ENCODE measurements at regions of chr11 and their contacts with region 1.

Region 1: DNA sequence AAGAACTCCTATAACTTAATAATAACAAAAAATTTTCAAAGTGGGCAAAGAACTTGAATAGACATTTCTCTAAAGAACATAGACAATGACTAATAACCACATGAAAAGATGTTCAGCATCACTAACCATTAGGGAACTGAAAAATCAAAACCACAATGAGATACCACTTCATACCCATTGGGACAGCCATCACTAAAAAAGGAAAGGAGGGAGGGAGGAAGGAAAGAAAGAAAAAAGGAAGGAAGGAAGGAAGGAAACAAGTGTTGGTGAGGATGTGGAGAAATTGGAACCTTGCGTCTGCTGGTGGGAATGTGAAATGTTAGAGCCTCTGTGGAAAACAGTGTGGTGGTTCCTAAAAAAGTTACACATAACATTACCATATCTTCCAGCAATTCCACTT is 55.8 kb downstream of the MS4A13 start:
- DNase-seq: no peak
- ATAC-seq: peak; percentile 96
- H3K4me3 Mint-ChIP-seq: peak overlapping the region; percentile 7
- H3K27ac Mint-ChIP-seq: peak overlapping the region; percentile 56
- H3K4me1 Mint-ChIP-seq: peaks cover 30% of the 10 kb centered on the region
- H3K27me3 Mint-ChIP-seq: peaks cover 3% of the 10 kb centered on the region
- CTCF ChIP-seq: no peak

Region 2: DNA sequence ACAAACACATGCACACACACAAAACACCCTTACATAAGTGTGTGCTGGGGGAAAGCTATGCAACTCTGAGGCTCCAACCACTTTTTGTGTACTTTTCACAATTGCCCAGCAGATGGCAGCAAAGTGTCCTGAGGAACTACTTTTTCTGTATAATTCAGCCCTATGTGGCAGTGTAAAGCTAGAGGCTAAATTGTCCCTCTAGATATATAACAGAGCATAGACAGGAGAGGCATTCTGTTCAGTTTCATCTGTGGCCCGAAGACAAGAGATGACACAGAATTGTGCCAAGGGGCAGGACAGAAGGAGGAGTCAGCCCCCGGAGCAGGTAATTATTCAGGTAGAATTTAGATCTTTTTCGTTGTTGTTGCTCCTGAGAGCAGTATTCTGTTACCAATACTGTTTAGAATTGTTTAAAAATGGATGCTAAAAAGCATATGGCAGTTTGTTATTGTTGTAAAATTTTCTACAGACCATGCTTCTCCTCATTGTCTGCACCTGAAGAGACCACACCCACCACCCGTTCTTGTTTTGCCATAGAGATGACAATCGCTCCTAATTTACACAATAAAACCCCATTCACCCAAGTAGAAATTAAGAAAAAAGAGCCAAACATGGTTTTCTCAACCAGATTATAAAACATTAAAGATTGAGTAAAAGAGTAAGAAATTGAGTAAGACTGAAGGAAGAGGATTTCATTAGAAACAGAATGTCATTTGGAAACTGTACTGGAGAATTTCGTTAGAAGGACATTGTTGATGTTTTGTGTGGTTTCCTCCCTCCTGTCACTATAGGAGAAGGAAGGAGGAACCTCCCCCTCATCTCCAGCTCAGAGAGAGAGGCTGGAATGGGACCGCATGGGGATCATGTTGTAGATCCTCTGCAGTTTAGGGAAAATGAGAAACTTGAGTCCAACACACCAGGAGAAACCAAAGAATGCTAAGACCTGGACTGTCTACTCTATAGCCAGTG is 207.1 kb before region 1 on chr11:
- CTCF ChIA-PET with region 1: no interaction called
- POLR2A ChIA-PET with region 1: no interaction called
- intact Hi-C with region 1: no loop called
- DNase-seq: peak; percentile 42
- ATAC-seq: peak; percentile 81
- H3K4me3 Mint-ChIP-seq: peak overlapping the region; percentile 83
- H3K27ac Mint-ChIP-seq: peak overlapping the region; percentile 93
- H3K4me1 Mint-ChIP-seq: peaks cover 80% of the 10 kb centered on the region
- H3K27me3 Mint-ChIP-seq: no peaks in the 10 kb centered on the region
- CTCF ChIP-seq: no peak

Region 3: DNA sequence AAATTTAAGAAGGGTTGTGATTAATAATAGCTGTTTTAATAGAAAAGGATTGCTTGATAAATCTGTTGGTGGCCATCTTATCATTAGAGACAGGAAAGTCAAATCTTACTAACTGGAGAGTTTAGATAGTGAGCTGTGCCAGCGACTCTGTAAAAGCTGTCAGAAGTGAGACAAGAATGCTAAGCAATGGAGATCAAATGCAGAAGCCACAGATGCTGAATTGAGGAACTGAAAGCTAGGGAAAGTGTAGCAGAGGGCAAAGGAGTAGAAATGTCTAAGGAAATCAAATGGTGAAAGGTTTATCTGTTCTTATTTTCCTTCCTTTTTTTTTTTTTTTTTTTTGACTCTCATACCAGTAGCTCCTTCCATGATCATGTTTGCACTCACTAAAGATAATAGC is 42.0 kb before region 1 on chr11:
- CTCF ChIA-PET with region 1: no interaction called
- POLR2A ChIA-PET with region 1: no interaction called
- intact Hi-C with region 1: loop called (anchors 5 kb)
- DNase-seq: no peak
- ATAC-seq: peak; percentile 89
- H3K4me3 Mint-ChIP-seq: no peak overlapping the region
- H3K27ac Mint-ChIP-seq: peak overlapping the region; percentile 1
- H3K4me1 Mint-ChIP-seq: peaks cover 14% of the 10 kb centered on the region
- H3K27me3 Mint-ChIP-seq: no peaks in the 10 kb centered on the region
- CTCF ChIP-seq: no peak